OCI-LY7 (cell line): ENCODE measurements at regions of chr17 and their contacts with region 1.

Region 1: DNA sequence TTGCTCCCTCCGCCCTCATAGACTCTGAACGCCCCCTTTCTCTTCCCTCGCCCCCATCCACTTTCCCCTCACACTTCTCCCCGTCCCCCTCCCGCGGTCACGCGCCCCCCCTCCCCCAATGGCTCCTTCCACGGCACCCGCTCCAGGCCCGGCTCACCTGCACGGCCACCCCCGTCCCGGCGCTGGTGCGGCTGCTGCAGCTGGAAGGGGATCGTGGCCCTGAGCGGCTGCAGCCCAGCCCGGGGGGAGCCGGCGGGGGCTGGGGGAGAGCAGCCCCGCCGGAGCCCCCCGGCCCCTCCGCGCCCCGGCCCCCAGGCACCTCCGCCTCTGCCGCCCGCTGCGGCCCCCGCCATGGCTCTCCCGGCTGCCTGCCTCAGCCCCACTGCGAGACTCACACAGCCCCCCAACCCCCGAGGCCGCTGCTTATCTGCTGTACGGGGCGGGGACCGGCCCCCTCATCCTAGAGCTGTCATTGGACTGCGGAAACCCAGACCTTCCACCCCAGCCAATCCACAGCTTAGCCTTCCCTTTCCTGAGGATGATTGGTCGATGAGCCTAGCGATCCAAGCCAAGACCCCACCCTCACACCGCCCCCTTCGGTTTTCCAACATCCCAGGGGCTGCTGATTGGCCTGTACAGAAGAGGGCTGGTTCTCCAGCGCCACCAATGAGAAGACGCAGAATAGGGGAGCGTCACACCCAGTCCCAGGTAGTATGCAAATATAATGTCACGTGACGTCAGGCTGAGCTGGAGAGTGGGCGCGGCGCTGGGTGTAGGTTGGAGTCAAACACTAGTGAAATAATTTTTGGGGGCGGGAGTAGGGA is at the start of gene FAM117A:
- DNase-seq: peak; percentile 99
- H3K4me3 ChIP-seq: peak within 1 kb of the TSS; percentile 87
- H3K27ac ChIP-seq: peak within 1 kb of the TSS; percentile 79
- H3K4me1 ChIP-seq: peaks cover 41% of the 10 kb centered on the region
- CTCF ChIP-seq: no peak
- total RNA-seq, gene FAM117A: 29.9 and 40.4 TPM in 2 replicates

Region 2: DNA sequence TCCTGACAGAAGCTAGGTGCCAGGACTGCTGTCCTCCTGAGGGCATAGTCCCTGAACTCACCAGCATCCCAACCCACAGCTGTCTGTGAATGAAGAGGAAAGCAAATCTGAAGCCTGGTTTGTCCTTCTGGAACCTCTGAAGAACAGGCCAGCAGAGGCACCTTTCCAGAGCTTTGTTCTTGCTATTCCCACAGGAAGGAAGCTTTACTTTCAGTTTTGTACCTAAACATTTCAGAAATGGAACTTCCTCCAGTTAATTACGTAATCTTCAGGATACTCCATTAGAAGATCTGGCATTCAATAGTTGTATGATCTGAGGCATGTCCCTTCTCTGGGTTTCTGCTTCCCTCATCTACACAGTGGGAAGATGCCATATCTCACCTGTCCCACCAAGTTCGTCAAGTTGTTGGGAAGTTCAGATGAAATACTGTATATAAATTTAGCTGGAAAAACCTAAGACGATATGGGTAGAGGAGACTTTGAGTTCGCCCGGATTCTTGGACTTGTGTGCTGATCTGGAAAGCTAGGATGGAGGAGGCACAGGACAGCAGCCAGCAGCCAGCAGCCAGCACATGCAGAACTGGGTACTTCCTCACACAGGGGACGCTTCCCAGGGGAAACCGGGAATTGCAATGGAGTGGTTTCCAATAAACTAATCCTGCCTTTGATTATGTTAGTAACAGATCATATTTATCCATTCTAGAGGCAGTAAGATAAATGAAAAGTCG is 165.9 kb before region 1 on chr17:
- CTCF ChIA-PET with region 1: no interaction called
- POLR2A ChIA-PET with region 1: no interaction called
- intact Hi-C with region 1: no loop called
- DNase-seq: no peak
- H3K4me3 ChIP-seq: no peak overlapping the region
- H3K27ac ChIP-seq: no peak overlapping the region
- H3K4me1 ChIP-seq: no peaks in the 10 kb centered on the region
- CTCF ChIP-seq: no peak

Region 3: DNA sequence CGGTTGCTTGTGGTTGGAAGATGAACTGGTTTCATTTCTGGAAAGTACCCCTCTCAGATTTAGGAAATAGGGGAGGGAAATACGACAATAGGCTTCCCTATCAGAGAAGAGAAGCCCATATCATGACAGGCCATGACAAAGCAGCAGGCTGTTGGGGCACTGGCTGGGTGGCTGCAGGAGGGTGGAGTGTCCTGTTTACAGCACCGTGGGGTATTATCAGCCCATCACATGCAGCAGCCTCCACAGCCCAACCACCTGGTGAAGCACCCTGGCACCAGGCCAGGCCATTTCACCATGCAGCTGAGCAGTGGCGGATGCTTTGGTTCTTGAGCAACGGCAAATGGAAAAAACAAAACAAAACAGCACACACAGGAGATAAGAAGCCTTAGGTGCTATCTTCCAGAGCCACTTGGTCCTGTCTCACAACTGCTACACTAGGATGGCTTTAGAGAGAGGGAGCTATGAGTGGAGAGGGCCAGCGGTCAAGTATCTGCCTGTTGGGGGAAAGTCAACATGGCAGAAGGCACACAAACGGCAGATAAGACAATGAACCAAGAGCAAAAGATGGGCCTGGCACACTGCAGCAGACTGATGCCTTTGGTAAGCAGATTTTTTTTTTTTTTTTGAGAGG is 24.2 kb before region 1 on chr17:
- CTCF ChIA-PET with region 1: no interaction called
- POLR2A ChIA-PET with region 1: interaction called, 71 read pairs
- intact Hi-C with region 1: loop called (anchors 1 kb)
- DNase-seq: peak; percentile 96
- H3K4me3 ChIP-seq: peak overlapping the region; percentile 62
- H3K27ac ChIP-seq: peak overlapping the region; percentile 94
- H3K4me1 ChIP-seq: peaks cover 78% of the 10 kb centered on the region
- CTCF ChIP-seq: no peak

Region 4: GRCh38 chr17:49748791-49749190 is 15.2 kb before region 1 on chr17:
- CTCF ChIA-PET with region 1: interaction called, 7 read pairs
- POLR2A ChIA-PET with region 1: interaction called, 124 read pairs
- intact Hi-C with region 1: loop called (anchors 2 kb)
- DNase-seq: peak; percentile 90
- H3K4me3 ChIP-seq: peak overlapping the region; percentile 67
- H3K27ac ChIP-seq: peak overlapping the region; percentile 94
- H3K4me1 ChIP-seq: peaks cover 93% of the 10 kb centered on the region
- CTCF ChIP-seq: no peak

Region 5: DNA sequence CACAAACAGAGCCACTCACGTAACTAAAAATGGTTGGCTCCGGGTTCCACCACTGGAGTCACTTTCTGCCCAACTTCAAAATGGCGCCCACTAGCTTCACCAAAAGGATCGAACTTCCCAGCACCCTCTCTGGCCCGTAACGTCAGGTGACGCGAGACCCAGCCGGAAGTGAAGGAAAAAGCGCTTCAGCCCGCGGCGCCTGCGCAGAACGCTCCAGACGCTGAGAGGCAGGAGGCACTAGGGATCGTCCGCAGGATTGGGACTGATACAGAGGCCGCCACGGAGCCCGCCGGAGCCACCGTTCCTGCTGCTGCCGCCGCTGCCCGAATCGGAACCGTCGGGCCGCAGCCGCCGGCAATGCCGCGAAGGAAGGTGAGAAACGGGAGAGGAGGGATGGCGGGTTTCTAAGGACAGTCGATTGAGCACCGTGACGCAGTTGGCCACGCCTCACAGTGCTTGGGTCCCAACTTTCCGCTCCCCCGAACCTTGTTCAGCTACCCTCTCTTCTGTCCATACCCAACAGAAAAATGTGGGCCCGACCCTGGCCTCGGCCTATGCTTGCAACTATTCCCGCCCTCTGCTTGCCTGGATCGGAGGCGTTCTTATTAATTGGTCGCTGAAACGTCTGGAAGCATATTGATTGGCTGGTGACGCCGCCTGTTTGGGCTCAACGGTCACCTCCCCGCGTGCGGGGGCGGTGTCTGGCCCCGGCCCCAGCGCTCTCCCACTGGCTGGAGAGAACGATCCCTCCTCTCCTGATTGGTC is 24.7 kb after region 1 on chr17 and contains the start of gene KAT7:
- CTCF ChIA-PET with region 1: interaction called, 3 read pairs
- POLR2A ChIA-PET with region 1: interaction called, 10 read pairs
- intact Hi-C with region 1: loop called (anchors 2 kb)
- DNase-seq: peak; percentile 100
- H3K4me3 ChIP-seq: peak within 1 kb of the TSS; percentile 88
- H3K27ac ChIP-seq: peak within 1 kb of the TSS; percentile 86
- H3K4me1 ChIP-seq: peaks cover 25% of the 10 kb centered on the region
- CTCF ChIP-seq: no peak
- total RNA-seq, gene KAT7: 41.0 and 43.3 TPM in 2 replicates